Calu3 (cell line): ENCODE measurements at regions of chr22 and their contacts with region 1.

Region 1: GRCh38 chr22:30561402-30562179 is 12.9 kb downstream of the GAL3ST1 start:
- DNase-seq: no peak
- H3K4me3 Mint-ChIP-seq: no peak overlapping the region
- H3K27ac Mint-ChIP-seq: no peak overlapping the region
- H3K4me1 Mint-ChIP-seq: peaks cover 22% of the 10 kb centered on the region
- H3K27me3 Mint-ChIP-seq: no peaks in the 10 kb centered on the region
- CTCF ChIP-seq: no peak

Region 2: GRCh38 chr22:30547188-30547587 is 14.4 kb before region 1 on chr22:
- CTCF ChIA-PET with region 1: interaction called, 10 read pairs
- intact Hi-C with region 1: no loop called
- DNase-seq: no peak
- H3K4me3 Mint-ChIP-seq: no peak overlapping the region
- H3K27ac Mint-ChIP-seq: no peak overlapping the region
- H3K4me1 Mint-ChIP-seq: no peaks in the 10 kb centered on the region
- H3K27me3 Mint-ChIP-seq: peaks cover 48% of the 10 kb centered on the region
- CTCF ChIP-seq: no peak